Mammary epithelial cell (primary cell): ENCODE measurements at regions of chr5 and their contacts with region 1.

Region 1: DNA sequence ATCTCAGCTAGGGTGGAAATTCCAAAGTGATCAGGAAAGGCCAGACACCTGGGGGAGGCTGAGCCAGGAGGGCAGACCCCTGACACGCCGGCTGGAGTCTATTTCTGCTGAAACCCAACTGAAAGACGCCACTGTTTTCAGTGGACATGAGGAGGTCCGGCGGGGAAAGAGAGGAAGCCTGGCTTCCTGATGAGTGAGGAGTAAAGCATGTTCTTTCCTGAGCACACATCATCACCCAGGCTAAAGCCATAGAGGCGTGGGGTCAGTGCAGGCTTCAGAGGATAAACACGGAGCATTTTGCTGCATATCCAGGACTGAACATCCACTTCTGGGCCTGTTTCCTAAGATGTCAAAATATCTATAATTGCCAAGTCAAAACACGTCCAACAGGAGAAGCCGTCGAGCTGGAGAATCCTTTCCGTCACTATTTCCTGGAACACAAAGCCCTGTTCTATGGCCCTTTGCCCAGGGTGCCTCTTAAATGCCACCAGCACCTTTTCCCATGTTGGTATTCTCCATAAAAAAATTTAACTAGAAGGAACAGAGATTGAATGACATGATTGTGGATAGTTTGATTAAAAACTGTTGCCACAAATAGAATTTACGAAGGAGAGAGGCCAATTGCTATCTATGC is 597.9 kb upstream of the ADAMTS16 start:
- DNase-seq: no peak
- H3K4me3 ChIP-seq: no peak overlapping the region
- H3K27ac ChIP-seq: no peak overlapping the region
- H3K4me1 ChIP-seq: peaks cover 2% of the 10 kb centered on the region
- H3K27me3 ChIP-seq: no peaks in the 10 kb centered on the region
- CTCF ChIP-seq: no peak

Region 2: DNA sequence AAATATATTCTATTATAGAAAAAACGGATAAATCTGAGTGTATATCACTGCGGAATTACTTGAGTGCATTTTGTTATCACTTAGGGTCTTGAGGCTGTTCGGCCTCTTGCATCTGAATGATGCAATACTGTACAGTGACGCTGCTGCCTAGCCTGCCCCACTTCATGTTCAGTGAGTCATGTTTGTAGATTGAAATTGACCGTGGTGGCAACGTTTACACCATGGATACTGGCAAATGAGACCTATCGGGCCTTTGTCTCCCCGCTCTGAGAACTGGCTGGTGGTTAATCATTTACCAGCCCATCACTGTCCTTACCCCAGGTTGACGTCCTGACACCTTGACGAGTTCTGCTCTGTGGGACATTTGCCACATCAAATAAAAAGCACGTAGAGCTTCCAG is 87.8 kb after region 1 on chr5:
- CTCF ChIA-PET with region 1: no interaction called
- dilution Hi-C with region 1: loop called (anchors 10 kb)
- in situ Hi-C with region 1: no loop called
- intact Hi-C with region 1: no loop called
- DNase-seq: no peak
- H3K4me3 ChIP-seq: no peak overlapping the region
- H3K27ac ChIP-seq: no peak overlapping the region
- H3K4me1 ChIP-seq: no peaks in the 10 kb centered on the region
- H3K27me3 ChIP-seq: no peaks in the 10 kb centered on the region
- CTCF ChIP-seq: no peak